OCI-LY7 (cell line): ENCODE measurements at regions of chr13 and their contacts with region 1.

Region 1: DNA sequence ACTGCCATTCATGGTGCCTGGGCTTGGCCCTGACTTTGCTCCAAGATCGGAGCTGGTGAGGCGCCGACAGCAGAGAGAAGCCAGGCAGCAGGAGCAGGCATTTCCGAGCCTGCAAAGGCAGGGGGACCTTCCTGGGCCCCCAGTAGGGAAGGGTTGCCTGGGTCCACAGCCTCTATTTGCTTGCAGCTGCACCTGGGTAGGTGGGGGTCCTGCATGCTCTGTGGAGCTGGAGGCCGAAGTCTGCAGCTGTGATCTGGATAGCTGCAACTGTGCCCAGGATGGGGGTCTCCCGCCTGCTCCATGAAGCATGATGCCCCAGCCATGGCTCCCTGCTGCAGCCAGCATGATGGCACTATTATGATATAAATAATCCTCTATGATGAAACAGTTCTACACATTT is 2144.2 kb downstream of the PCDH9 start:
- DNase-seq: no peak
- H3K4me3 ChIP-seq: no peak overlapping the region
- H3K27ac ChIP-seq: no peak overlapping the region
- H3K4me1 ChIP-seq: no peaks in the 10 kb centered on the region
- CTCF ChIP-seq: no peak

Region 2: GRCh38 chr13:64912141-64912540 is 173.8 kb before region 1 on chr13:
- CTCF ChIA-PET with region 1: no interaction called
- POLR2A ChIA-PET with region 1: no interaction called
- intact Hi-C with region 1: no loop called
- DNase-seq: no peak
- H3K4me3 ChIP-seq: no peak overlapping the region
- H3K27ac ChIP-seq: no peak overlapping the region
- H3K4me1 ChIP-seq: no peaks in the 10 kb centered on the region
- CTCF ChIP-seq: no peak

Region 3: GRCh38 chr13:65057986-65058385 is 28.0 kb before region 1 on chr13:
- CTCF ChIA-PET with region 1: no interaction called
- POLR2A ChIA-PET with region 1: interaction called, 3 read pairs
- intact Hi-C with region 1: loop called (anchors 2 kb)
- DNase-seq: no peak
- H3K4me3 ChIP-seq: no peak overlapping the region
- H3K27ac ChIP-seq: no peak overlapping the region
- H3K4me1 ChIP-seq: no peaks in the 10 kb centered on the region
- CTCF ChIP-seq: no peak

Region 4: DNA sequence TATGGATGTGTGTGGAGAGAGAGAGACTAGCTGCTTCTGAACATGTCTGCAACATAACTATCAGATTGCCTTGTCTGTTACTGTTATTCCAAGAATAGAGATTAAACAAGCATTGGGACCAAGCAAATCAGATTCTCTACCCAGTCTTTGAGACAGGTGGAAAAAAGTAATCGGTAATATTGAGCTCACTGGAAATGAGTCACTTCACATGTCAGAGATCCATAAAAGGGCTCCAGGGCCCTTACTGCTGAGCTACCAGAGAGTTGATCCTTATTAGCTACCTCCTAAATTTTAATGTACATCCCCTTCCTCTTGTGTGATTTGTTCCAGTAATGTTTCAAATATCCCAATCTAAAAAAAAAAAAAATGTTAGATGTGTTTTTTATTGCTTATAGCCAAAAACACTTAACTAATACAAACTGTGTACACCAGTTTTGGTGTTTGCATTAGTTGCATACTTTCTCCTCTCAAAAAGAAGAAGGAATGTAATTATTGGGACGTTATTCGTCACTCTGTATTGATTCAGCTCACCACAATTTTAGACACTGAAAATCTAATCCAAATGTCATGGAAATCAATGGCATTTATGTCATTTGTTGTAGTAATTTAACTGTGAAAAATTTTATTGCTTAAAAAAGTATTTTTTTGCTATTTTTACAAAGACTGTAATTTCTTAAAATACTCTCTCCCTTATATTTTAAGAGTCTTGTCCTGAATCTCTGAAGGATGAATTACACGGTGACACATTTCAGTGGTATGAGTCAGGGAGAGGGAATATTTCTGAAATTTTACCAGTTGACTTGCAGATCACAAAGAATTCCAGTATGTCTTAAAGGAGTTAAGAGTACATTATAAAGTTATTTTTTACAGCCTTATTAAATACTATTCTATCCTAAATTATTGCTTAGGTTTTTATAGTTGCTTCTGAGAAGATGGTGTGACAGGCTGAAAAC is 26.4 kb after region 1 on chr13:
- CTCF ChIA-PET with region 1: no interaction called
- POLR2A ChIA-PET with region 1: no interaction called
- intact Hi-C with region 1: no loop called
- DNase-seq: no peak
- H3K4me3 ChIP-seq: no peak overlapping the region
- H3K27ac ChIP-seq: no peak overlapping the region
- H3K4me1 ChIP-seq: no peaks in the 10 kb centered on the region
- CTCF ChIP-seq: no peak